ENCODE measurements at regions of chr1 and their contacts with region 1.

Region 1: DNA sequence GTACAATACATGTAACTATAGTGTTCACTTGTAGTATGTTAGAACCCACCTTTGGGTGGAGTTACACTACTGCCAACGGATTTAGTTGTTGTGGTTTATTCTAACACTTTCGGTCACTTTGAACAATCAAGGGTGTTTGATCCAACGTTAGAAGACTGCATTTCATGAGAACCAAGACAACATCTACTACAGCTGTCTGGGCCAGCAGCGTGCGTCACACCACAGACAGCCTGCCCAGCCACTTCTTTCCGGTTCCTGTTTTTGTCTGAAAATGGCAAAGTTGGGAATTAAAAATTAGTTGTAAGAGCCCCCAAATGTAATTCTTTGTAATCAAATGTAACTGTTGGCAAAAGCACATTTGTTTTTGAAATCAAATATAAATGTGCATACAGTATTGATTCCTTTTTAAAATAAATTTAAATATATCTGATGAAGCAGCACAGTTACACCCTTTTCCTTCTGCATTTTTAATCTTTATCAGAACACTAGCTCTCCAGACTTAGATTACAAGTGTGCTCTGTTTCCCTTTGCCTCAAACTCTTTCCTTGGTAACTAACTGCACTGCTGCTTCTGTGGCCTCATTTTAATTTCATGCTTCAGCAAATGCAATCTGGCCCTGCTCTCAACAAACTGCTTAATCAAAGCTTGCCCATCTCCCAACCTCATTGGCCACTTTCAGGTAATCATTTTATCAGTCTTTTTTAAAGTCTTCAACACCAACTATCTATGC is 86.6 kb upstream of the DPH5 start:
- DNase-seq: peak; percentile 82
- ATAC-seq: peak; percentile 99
- H3K4me3 Mint-ChIP-seq: peak overlapping the region; percentile 27
- H3K27ac Mint-ChIP-seq: peak overlapping the region; percentile 95
- H3K4me1 Mint-ChIP-seq: peaks cover 67% of the 10 kb centered on the region
- H3K27me3 Mint-ChIP-seq: no peaks in the 10 kb centered on the region

Region 2: DNA sequence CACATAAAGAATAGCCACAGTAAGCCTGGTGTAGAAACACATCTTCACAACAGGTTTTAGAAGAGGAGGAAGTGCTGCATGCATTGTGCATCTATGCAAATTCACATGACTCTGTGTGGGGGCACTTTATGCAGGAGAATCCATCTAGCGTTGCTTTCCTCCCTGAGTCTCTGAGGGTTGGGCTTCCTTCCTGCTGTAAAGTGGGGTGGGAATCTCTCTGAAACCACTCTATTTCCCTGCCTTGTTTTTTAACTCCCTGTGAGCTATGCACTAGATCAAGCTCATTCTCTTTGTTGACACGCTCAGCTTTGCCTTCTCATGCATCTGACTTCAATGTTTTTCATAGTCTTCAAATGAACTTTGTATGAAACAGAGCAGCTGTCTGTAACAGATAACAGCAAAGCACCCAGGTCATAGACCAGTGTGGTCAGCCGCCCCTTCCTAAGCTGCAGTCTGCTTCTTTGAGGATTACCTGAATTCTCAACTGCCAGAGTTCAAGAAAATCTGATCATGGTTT is 16.1 kb after region 1 on chr1:
- CTCF ChIA-PET with region 1: interaction called, 20 read pairs
- POLR2A ChIA-PET with region 1: interaction called, 10 read pairs
- DNase-seq: peak; percentile 47
- ATAC-seq: peak; percentile 74
- H3K4me3 Mint-ChIP-seq: peak overlapping the region; percentile 58
- H3K27ac Mint-ChIP-seq: peak overlapping the region; percentile 81
- H3K4me1 Mint-ChIP-seq: peaks cover 78% of the 10 kb centered on the region
- H3K27me3 Mint-ChIP-seq: no peaks in the 10 kb centered on the region

Region 3: GRCh38 chr1:101247404-101248287 is 135.4 kb after region 1 on chr1:
- CTCF ChIA-PET with region 1: no interaction called
- POLR2A ChIA-PET with region 1: no interaction called
- DNase-seq: peak; percentile 11
- ATAC-seq: no peak
- H3K4me3 Mint-ChIP-seq: no peak overlapping the region
- H3K27ac Mint-ChIP-seq: no peak overlapping the region
- H3K4me1 Mint-ChIP-seq: peaks cover 22% of the 10 kb centered on the region
- H3K27me3 Mint-ChIP-seq: no peaks in the 10 kb centered on the region

Region 4: GRCh38 chr1:101338714-101339430 is 226.7 kb after region 1 on chr1:
- CTCF ChIA-PET with region 1: no interaction called
- POLR2A ChIA-PET with region 1: no interaction called
- DNase-seq: no peak
- ATAC-seq: peak; percentile 64
- H3K4me3 Mint-ChIP-seq: no peak overlapping the region
- H3K27ac Mint-ChIP-seq: no peak overlapping the region
- H3K4me1 Mint-ChIP-seq: peaks cover 7% of the 10 kb centered on the region
- H3K27me3 Mint-ChIP-seq: no peaks in the 10 kb centered on the region